ENCODE measurements at regions of chr1 and their contacts with region 1.

Region 1: DNA sequence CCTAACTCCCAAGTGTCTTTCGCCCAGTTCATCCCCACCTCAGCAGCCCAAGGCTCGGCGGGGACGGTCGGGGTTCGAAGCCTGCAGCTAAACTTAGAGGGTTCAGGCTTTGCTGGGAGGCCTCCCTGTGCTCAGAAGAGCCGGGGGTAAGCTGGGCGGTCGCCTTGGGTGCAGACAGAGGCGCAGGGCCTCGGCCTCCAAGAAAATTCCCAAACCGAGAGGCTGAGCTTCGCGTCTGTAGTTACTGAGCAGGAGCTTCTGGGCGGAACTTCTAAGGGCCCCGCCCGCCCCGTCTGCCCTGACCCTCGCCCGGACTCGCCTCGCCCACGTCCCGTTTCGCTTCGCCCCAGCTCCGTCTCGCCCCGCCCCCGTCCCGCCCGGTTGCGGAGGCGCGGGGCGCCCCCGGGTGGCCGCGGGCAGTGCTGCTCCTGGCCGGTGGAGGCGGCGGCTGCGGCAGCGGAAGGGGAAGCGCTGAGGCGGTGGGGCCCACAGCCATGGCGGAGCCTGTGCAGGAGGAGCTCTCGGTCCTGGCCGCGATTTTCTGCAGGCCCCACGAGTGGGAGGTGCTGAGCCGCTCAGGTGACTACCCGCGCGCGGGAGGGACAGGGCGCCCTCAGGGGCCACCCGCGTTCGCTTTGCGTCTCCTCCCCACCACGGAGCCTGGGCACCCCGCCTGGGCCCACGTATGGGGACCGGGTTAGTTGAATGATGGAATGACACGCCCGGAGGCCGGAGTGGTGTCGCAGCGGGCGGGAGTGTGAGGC is at the start of gene RWDD3:
- DNase-seq: peak; percentile 93
- ATAC-seq: peak; percentile 97
- H3K4me3 Mint-ChIP-seq: peak within 1 kb of the TSS; percentile 91
- H3K27ac Mint-ChIP-seq: peak within 1 kb of the TSS; percentile 91
- H3K4me1 Mint-ChIP-seq: peaks cover 34% of the 10 kb centered on the region
- H3K27me3 Mint-ChIP-seq: peaks cover 14% of the 10 kb centered on the region
- CTCF ChIP-seq: peak; percentile 65
- total RNA-seq, gene RWDD3: 15.2 to 17.8 TPM

Region 2: GRCh38 chr1:95072532-95073419 is 161.1 kb before region 1 on chr1 and contains the start of gene ALG14:
- CTCF ChIA-PET with region 1: interaction called, 7 read pairs
- POLR2A ChIA-PET with region 1: interaction called, 4 read pairs
- intact Hi-C with region 1: loop called (anchors 5 kb)
- DNase-seq: peak; percentile 95
- ATAC-seq: peak; percentile 93
- H3K4me3 Mint-ChIP-seq: peak within 1 kb of the TSS; percentile 93
- H3K27ac Mint-ChIP-seq: peak within 1 kb of the TSS; percentile 99
- H3K4me1 Mint-ChIP-seq: peaks cover 8% of the 10 kb centered on the region
- H3K27me3 Mint-ChIP-seq: no peaks in the 10 kb centered on the region
- CTCF ChIP-seq: no peak
- total RNA-seq, gene ALG14: 2.5 to 2.9 TPM

Region 3: GRCh38 chr1:95084317-95085176 is 149.4 kb before region 1 on chr1:
- CTCF ChIA-PET with region 1: interaction called, 37 read pairs
- POLR2A ChIA-PET with region 1: no interaction called
- intact Hi-C with region 1: no loop called
- DNase-seq: peak; percentile 46
- ATAC-seq: peak; percentile 75
- H3K4me3 Mint-ChIP-seq: no peak overlapping the region
- H3K27ac Mint-ChIP-seq: no peak overlapping the region
- H3K4me1 Mint-ChIP-seq: no peaks in the 10 kb centered on the region
- H3K27me3 Mint-ChIP-seq: peaks cover 6% of the 10 kb centered on the region
- CTCF ChIP-seq: peak; percentile 82

Region 4: DNA sequence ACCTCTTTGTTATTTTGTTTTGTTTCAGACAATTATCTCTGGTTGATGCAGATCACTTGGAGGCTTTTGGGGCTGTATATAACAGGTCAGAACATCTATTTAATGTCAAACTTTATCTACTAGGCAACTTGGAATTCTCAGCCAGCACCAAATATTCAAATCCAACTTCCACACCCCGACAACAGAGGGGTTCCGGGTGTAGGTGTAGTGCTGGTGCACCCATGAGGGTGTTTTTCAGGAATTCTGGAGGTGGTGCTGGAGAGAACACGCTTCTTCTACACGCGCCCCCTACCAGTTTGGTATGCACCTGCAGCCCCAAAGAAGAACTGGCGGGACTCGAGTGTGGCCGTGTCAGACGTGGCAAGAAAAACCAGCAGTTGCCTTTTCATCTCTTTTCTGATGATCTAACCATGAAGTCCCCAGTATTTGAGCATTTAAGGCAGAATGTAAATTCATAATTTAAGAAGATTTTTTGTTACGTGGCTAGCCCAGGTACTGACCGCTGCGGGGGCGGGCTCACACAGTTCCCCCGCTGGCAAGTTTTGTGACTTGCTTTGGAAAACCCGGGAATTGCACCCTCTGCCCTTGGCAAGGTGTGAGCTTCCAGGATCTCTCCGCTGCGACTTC is 117.2 kb before region 1 on chr1:
- CTCF ChIA-PET with region 1: interaction called, 25 read pairs
- POLR2A ChIA-PET with region 1: no interaction called
- intact Hi-C with region 1: no loop called
- DNase-seq: peak; percentile 69
- ATAC-seq: peak; percentile 78
- H3K4me3 Mint-ChIP-seq: peak overlapping the region; percentile 77
- H3K27ac Mint-ChIP-seq: peak overlapping the region; percentile 68
- H3K4me1 Mint-ChIP-seq: peaks cover 8% of the 10 kb centered on the region
- H3K27me3 Mint-ChIP-seq: peaks cover 54% of the 10 kb centered on the region
- CTCF ChIP-seq: peak; percentile 56

Region 5: GRCh38 chr1:95223110-95223509 is 10.8 kb before region 1 on chr1:
- CTCF ChIA-PET with region 1: interaction called, 13 read pairs
- POLR2A ChIA-PET with region 1: interaction called, 4 read pairs
- intact Hi-C with region 1: no loop called
- DNase-seq: no peak
- ATAC-seq: no peak
- H3K4me3 Mint-ChIP-seq: no peak overlapping the region
- H3K27ac Mint-ChIP-seq: no peak overlapping the region
- H3K4me1 Mint-ChIP-seq: no peaks in the 10 kb centered on the region
- H3K27me3 Mint-ChIP-seq: peaks cover 19% of the 10 kb centered on the region
- CTCF ChIP-seq: no peak

Region 6: DNA sequence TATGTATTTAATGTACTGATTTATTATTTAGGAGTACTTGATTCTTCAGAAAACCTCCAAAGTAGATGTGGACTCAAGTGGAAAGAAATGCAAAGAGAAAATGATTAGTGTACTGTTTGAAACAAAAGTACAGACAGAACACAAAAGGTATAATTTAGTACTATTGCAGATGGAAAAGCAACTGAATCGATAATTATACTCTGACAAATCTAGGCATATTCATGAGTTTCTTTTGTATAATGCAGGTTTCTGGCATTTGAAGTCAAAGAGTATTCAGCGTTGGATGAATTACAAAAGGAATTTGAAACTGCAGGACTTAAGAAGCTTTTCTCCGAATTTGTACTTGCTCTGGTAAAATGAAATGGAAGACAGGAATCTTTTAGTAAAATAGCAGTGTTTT is 12.6 kb after region 1 on chr1:
- CTCF ChIA-PET with region 1: interaction called, 14 read pairs
- POLR2A ChIA-PET with region 1: interaction called, 7 read pairs
- intact Hi-C with region 1: no loop called
- DNase-seq: no peak
- ATAC-seq: no peak
- H3K4me3 Mint-ChIP-seq: no peak overlapping the region
- H3K27ac Mint-ChIP-seq: no peak overlapping the region
- H3K4me1 Mint-ChIP-seq: peaks cover 14% of the 10 kb centered on the region
- H3K27me3 Mint-ChIP-seq: no peaks in the 10 kb centered on the region
- CTCF ChIP-seq: no peak